ENCODE measurements at regions of chr2 and their contacts with region 1.

Region 1: GRCh38 chr2:144505245-144505831 is 14.6 kb downstream of the ZEB2 start:
- DNase-seq: no peak
- H3K4me3 ChIP-seq: no peak overlapping the region
- H3K27ac ChIP-seq: no peak overlapping the region
- H3K4me1 ChIP-seq: peaks cover 26% of the 10 kb centered on the region
- H3K27me3 ChIP-seq: no peaks in the 10 kb centered on the region
- CTCF ChIP-seq: no peak
- EP300 ChIP-seq: no peak
- POLR2A ChIP-seq: no peak

Region 2: DNA sequence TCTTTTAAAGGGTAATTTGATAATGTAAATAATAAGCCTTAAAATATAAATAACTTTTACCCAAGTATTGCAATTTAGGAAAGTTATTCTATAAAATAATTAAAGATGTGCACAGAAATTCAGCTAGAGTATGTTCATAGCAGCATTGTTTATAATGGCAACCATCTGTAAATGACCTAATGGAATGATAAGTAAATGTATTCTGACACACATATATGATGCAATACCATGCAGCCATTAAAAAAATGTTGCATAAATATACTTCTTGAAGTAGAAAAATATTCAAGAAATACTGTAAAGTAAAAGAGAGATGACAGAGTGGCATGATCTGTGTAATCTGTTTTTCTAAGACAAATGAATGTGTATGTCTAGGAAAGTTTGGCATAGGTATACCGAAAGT is 531.1 kb before region 1 on chr2:
- intact Hi-C with region 1: no loop called
- DNase-seq: no peak
- H3K4me3 ChIP-seq: no peak overlapping the region
- H3K27ac ChIP-seq: no peak overlapping the region
- H3K4me1 ChIP-seq: peaks cover 1% of the 10 kb centered on the region
- H3K27me3 ChIP-seq: peaks cover 4% of the 10 kb centered on the region
- CTCF ChIP-seq: no peak
- EP300 ChIP-seq: no peak
- POLR2A ChIP-seq: no peak

Region 3: GRCh38 chr2:144430722-144431391 is 74.5 kb before region 1 on chr2:
- intact Hi-C with region 1: loop called in 2 of 4 experiments (anchors 10 kb)
- DNase-seq: peak; percentile 51 to 75 (median 60)
- H3K4me3 ChIP-seq: no peak overlapping the region
- H3K27ac ChIP-seq: peak overlapping the region; percentile 49 to 72
- H3K4me1 ChIP-seq: peaks cover 11% of the 10 kb centered on the region
- H3K27me3 ChIP-seq: no peaks in the 10 kb centered on the region
- CTCF ChIP-seq: no peak
- EP300 ChIP-seq: no peak
- POLR2A ChIP-seq: no peak

Region 4: DNA sequence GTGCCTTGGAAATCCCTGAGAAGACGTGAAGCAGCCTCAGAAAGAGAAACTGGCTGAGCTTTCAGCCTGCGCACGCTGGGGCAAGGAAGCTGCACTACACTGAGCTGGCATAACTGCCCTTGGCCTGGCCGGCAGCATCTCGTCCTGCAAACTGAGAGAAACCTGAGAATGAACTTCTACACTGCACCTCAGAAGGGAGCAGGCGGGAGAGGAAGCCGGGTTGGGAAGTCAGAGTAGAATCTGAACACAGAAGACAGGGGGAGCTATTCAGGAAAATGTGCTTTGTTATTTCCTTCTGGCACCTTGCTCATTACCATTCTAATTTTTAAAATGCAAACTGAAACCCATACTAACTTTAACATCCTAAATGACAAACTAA is 56.3 kb before region 1 on chr2:
- intact Hi-C with region 1: loop called in 2 of 4 experiments (anchors 10 kb)
- DNase-seq: peak in 1 of 5 donors; percentile 49
- H3K4me3 ChIP-seq: no peak overlapping the region
- H3K27ac ChIP-seq: no peak overlapping the region
- H3K4me1 ChIP-seq: peaks cover 18% of the 10 kb centered on the region
- H3K27me3 ChIP-seq: no peaks in the 10 kb centered on the region
- CTCF ChIP-seq: peak in 1 of 3 donors; percentile 11
- EP300 ChIP-seq: no peak
- POLR2A ChIP-seq: no peak

Region 5: GRCh38 chr2:144471305-144472045 is 33.9 kb before region 1 on chr2:
- intact Hi-C with region 1: no loop called
- DNase-seq: no peak
- H3K4me3 ChIP-seq: no peak overlapping the region
- H3K27ac ChIP-seq: no peak overlapping the region
- H3K4me1 ChIP-seq: peaks cover 18% of the 10 kb centered on the region
- H3K27me3 ChIP-seq: no peaks in the 10 kb centered on the region
- CTCF ChIP-seq: no peak
- EP300 ChIP-seq: no peak
- POLR2A ChIP-seq: no peak

Measured in ovary (tissue), 10 donors.